ENCODE measurements at regions of chr4 and their contacts with region 1.

Region 1: DNA sequence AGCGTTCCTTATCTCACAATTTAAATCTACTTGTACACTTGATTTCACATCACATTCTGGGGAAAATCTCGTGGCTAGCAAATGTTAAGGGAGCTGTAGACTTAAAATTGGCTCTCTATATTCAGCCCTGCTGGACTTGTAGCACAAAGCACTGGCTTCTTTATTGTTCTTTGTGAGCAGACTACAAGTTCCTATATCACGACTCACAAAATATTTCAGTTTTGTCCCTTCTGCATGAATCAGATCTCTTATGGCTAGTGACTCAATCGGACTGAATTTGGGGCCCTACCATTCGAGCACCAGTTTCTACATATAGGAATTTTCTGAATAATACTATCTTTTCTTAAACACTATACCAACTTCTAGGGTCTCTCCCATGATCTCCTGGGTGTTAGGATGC is 390.1 kb downstream of the ADAM29 start:
- DNase-seq: no peak
- H3K4me3 Mint-ChIP-seq: no peak overlapping the region
- H3K27ac Mint-ChIP-seq: no peak overlapping the region
- H3K4me1 Mint-ChIP-seq: peaks cover 15% of the 10 kb centered on the region
- H3K27me3 Mint-ChIP-seq: no peaks in the 10 kb centered on the region
- CTCF ChIP-seq: no peak

Region 2: GRCh38 chr4:175238827-175239521 is 69.3 kb before region 1 on chr4:
- CTCF ChIA-PET with region 1: no interaction called
- POLR2A ChIA-PET with region 1: no interaction called
- intact Hi-C with region 1: no loop called
- DNase-seq: peak; percentile 44
- H3K4me3 Mint-ChIP-seq: no peak overlapping the region
- H3K27ac Mint-ChIP-seq: no peak overlapping the region
- H3K4me1 Mint-ChIP-seq: no peaks in the 10 kb centered on the region
- H3K27me3 Mint-ChIP-seq: no peaks in the 10 kb centered on the region
- CTCF ChIP-seq: no peak

Region 3: GRCh38 chr4:175273991-175274753 is 34.1 kb before region 1 on chr4:
- CTCF ChIA-PET with region 1: no interaction called
- POLR2A ChIA-PET with region 1: no interaction called
- intact Hi-C with region 1: no loop called
- DNase-seq: peak; percentile 9
- H3K4me3 Mint-ChIP-seq: no peak overlapping the region
- H3K27ac Mint-ChIP-seq: no peak overlapping the region
- H3K4me1 Mint-ChIP-seq: no peaks in the 10 kb centered on the region
- H3K27me3 Mint-ChIP-seq: no peaks in the 10 kb centered on the region
- CTCF ChIP-seq: no peak

Region 4: DNA sequence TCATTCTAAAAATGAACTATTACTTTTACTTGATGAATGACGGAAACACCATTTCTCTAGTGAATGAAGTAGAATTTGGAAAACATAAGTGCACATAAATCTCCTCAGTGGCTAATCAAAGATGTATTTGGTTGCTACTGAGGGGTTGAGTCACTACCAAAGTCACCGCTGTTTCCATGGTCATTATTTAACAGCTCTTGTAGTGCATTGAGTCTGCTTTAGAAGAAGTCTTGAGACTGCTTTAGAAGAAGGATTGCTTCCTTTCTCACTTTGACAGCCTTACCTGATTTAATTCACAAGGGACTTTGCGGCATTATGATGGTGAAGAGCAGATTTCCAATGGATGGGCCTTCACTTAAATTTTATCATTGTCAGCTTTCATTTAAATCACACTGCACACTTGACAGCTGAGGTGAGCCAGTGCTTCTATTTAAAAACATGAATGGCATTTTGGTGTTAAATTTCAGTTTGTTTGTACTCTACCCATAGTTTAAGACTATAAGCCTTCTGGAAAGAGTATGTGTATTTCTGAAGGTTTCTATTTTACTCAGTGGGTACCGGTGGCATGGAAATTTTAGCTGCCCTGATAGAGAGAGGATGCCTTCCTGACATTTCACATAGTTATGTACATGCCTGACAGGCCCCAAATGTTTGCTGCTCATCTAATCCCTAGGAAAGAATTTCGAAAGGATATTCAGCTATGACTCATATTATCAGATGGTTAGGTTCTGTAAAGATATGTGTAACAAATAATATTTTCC is 951.3 kb after region 1 on chr4:
- CTCF ChIA-PET with region 1: no interaction called
- POLR2A ChIA-PET with region 1: no interaction called
- intact Hi-C with region 1: loop called (anchors 10 kb)
- DNase-seq: peak; percentile 51
- H3K4me3 Mint-ChIP-seq: no peak overlapping the region
- H3K27ac Mint-ChIP-seq: peak overlapping the region; percentile 27
- H3K4me1 Mint-ChIP-seq: peaks cover 4% of the 10 kb centered on the region
- H3K27me3 Mint-ChIP-seq: no peaks in the 10 kb centered on the region
- CTCF ChIP-seq: no peak